GM23248 (cell line): ENCODE measurements at regions of chr3 and their contacts with region 1.

Region 1: GRCh38 chr3:55746808-55747413 is 259.8 kb upstream of the WNT5A start:
- DNase-seq: peak; percentile 46
- H3K4me3 ChIP-seq: no peak overlapping the region
- H3K27ac ChIP-seq: no peak overlapping the region
- H3K4me1 ChIP-seq: peaks cover 18% of the 10 kb centered on the region
- H3K27me3 ChIP-seq: no peaks in the 10 kb centered on the region

Region 2: DNA sequence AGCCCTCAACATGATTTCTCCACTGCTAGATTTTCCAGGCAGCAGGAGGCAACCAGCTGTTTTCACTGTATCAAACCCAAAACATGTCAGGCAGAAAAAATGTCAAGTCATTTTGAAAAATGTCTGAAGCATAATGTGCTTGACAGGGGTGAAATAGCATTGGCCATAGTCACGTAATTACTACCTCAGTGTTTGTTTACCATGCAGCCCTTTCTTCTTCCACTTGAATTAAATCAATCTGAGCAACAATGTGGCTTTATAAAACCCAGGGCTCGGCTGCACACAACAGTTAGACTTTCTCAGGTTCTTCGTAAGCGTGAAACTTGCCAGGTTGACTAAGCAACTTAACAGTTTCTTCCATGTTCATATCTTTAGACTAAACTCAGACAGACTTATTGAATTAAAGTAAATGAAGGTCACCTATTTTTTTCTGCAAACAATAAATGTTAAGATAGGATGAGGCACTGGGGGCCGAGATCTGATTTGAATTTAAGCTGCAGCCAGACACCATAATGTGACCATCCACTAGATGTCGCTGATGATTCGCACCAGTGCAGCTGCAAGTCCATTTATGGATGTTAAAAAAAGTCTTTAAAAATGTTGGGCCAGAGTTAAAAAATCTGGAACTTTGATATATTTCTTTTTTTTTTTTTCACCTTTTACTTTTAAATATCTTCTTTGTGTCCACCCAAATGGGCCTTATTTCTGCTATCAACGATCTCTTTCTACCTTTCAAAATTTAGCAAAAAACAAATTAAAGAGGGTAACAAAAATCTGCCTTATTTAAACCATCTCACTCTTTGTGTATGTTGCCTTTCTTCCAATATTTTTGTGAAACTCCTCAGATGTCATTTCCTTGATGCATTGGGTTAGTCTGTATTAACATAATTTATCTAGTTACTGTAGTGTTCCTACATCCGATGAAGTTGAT is 1318.7 kb before region 1 on chr3:
- in situ Hi-C with region 1: loop called (anchors 25 kb)
- DNase-seq: peak; percentile 75
- H3K4me3 ChIP-seq: peak overlapping the region; percentile 47
- H3K27ac ChIP-seq: no peak overlapping the region
- H3K4me1 ChIP-seq: 0 out of 2 replicates have a peak, but pooled peaks cover 5% of the 10 kb centered on the region
- H3K27me3 ChIP-seq: no peaks in the 10 kb centered on the region

Region 3: DNA sequence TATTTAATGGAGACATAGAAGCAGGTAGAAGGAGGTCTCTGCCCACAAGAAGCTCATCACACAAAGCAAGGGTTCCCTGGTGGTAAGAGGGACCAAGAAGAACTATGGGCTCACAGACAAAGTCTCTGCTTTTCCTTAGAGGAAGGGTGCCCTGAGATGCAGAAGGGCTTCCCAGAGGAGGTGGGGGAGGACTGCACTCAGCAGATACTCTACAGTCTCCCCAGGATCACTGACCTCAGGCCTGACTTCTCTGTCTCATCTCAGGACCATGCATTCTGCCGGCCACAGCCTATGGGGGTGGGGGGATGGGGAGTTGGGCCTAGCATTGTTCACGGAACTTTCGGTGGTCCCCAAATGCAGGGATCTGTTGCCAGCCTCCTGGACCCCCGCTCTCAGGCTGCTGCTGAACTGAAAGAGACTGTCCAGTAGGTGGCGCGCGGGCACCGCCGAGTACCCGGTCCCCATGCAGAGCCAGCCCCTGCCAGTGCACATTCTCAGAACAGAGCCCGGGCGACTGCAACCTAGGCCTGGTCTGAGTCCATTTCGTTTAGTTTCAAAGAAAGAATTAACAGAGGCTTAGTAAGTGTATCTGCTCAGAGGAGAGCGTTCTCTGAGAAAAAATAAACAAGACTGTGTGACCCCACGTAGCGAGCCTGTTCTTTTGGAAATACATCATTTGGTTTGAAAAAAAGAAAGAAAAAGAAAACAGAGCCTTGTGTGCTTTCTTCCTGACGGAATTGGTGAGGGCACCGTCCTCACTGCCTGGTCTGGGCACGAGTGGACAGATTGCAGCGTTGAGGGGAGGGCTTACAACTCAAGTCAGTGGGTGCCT is 893.1 kb before region 1 on chr3:
- in situ Hi-C with region 1: loop called (anchors 25 kb)
- DNase-seq: peak; percentile 84
- H3K4me3 ChIP-seq: no peak overlapping the region; the same call in 1 of the 2 replicates
- H3K27ac ChIP-seq: no peak overlapping the region
- H3K4me1 ChIP-seq: peaks cover 2% of the 10 kb centered on the region
- H3K27me3 ChIP-seq: no peaks in the 10 kb centered on the region

Region 4: DNA sequence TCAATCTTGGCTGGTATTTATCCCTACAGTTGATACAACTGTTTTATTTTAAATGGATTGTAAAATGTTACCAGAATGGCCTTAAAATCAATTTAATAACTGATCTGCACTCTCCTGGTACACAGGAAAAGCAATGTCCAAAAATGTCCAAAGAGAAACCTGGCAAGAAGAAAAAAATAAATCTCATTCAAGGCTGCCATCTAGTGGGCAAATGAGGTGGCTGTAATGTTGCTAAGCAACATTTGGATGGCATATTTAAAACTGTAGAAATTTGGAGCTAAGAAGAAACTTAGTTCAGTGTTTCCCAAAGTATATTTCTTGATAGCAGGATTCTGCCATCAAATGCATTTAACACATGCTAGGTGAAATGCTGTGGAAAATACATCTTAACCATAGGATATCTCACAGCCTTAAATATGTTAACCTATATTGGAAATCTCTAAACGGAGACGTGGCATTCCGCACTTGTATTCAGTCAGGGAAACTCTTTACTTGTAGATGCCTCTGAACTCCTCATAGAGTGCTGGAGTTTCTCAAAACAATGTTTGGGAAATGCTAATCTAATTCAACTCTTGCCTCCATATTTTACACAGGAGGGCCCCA is 504.5 kb after region 1 on chr3:
- in situ Hi-C with region 1: loop called (anchors 25 kb)
- DNase-seq: peak; percentile 60
- H3K4me3 ChIP-seq: no peak overlapping the region
- H3K27ac ChIP-seq: no peak overlapping the region
- H3K4me1 ChIP-seq: no peaks in the 10 kb centered on the region
- H3K27me3 ChIP-seq: peaks cover 4% of the 10 kb centered on the region; the same call in 1 of the 2 replicates